CD4-positive, alpha-beta memory T cell (primary cell): ENCODE measurements at regions of chr1 and their contacts with region 1.

Region 1: GRCh38 chr1:162035241-162035640 is 11.6 kb upstream of the OLFML2B start:
- DNase-seq: no peak
- H3K4me3 ChIP-seq: no peak overlapping the region
- H3K4me3 Mint-ChIP-seq: no peak overlapping the region
- H3K27ac ChIP-seq: no peak overlapping the region
- H3K27ac Mint-ChIP-seq: no peak overlapping the region
- H3K4me1 ChIP-seq: no peaks in the 10 kb centered on the region
- H3K4me1 Mint-ChIP-seq: peaks cover 0 to 3% (median 3%) of the 10 kb centered on the region in 4 donors
- H3K27me3 ChIP-seq: peaks cover 11% of the 10 kb centered on the region
- H3K27me3 Mint-ChIP-seq: peaks cover 2 to 29% of the 10 kb centered on the region in 2 donors

Region 2: DNA sequence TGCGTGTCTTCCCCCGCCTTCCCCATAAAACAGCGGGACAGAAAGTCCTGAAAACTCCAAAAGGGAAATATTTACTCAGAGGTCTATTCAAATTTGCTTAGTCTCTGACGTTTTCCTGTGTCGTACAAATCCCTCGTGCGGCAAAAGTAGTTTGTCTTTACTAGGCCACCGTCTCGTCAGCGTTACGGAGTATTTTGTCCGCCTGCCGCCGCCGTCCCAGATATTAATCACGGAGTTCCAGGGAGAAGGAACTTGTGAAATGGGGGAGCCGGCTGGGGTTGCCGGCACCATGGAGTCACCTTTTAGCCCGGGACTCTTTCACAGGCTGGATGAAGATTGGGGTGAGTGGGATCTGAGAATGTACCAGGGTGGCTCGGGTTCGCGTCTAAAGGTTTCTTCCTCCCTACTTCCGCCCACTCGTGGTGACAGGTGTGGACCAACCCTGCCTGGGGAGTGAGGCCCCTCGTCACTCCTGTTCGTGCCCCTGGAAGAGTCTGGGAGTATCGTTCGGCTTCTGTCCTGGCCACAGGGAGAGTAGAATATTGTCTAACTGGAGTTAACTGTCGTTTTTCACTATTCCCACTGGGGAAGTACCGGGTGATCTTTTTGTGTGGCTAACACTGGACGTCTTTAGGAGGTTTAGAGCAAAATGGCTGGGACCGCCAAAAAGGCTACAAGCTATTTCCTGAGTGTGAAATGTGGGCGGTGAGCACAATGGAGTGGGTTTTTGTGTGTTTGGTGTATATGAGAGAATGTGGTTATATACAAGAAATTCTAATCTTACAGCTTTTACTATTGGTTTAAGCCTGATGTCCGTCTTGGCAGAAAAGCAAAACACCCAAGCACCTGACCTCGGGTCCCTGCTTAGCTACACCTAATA is 268.9 kb before region 1 on chr1 and contains the start of gene ATF6:
- CTCF ChIA-PET with region 1: interaction called, 63 read pairs
- POLR2A ChIA-PET with region 1: no interaction called
- intact Hi-C with region 1: loop called (anchors 1 kb)
- DNase-seq: peak; percentile 77 to 85 (median 82)
- H3K4me3 ChIP-seq: peak within 1 kb of the TSS; percentile 89 to 90
- H3K4me3 Mint-ChIP-seq: peak within 1 kb of the TSS; percentile 95 to 100 (median 99)
- H3K27ac ChIP-seq: peak within 1 kb of the TSS; percentile 88
- H3K27ac Mint-ChIP-seq: peak within 1 kb of the TSS; percentile 97 to 99 (median 98)
- H3K4me1 ChIP-seq: peaks cover 58% of the 10 kb centered on the region
- H3K4me1 Mint-ChIP-seq: peaks cover 29 to 50% (median 41%) of the 10 kb centered on the region in 4 donors
- H3K27me3 ChIP-seq: no peaks in the 10 kb centered on the region
- H3K27me3 Mint-ChIP-seq: no peaks in the 10 kb centered on the region
- total RNA-seq, gene ATF6: 22.3 to 22.4 TPM

Region 3: DNA sequence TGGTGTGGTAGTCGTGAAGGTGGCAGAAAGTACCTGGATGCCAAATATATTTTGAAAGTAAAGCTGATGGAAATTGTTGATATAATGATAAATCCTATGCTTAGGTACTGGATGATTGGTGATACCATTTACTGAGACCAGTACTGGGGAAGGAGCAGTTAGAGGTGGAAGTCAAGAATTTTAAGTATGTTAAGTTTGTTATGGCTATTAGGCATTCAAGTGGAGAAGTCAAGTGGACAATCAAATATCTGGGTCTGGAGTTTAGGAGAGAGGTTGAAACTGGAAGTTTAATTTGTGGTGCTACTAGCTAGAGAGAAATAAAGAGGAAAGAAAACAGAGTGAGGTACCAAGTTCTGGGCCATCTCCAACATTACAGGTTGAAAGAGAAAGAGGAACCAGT is 180.0 kb before region 1 on chr1:
- CTCF ChIA-PET with region 1: interaction called, 20 read pairs
- POLR2A ChIA-PET with region 1: no interaction called
- intact Hi-C with region 1: no loop called
- DNase-seq: no peak
- H3K4me3 ChIP-seq: no peak overlapping the region
- H3K4me3 Mint-ChIP-seq: no peak overlapping the region
- H3K27ac ChIP-seq: no peak overlapping the region
- H3K27ac Mint-ChIP-seq: peak overlapping the region in 1 of 7 donors; percentile 1
- H3K4me1 ChIP-seq: no peaks in the 10 kb centered on the region
- H3K4me1 Mint-ChIP-seq: peaks cover 0 to 3% (median under 1%) of the 10 kb centered on the region in 4 donors
- H3K27me3 ChIP-seq: no peaks in the 10 kb centered on the region
- H3K27me3 Mint-ChIP-seq: no peaks in the 10 kb centered on the region

Region 4: DNA sequence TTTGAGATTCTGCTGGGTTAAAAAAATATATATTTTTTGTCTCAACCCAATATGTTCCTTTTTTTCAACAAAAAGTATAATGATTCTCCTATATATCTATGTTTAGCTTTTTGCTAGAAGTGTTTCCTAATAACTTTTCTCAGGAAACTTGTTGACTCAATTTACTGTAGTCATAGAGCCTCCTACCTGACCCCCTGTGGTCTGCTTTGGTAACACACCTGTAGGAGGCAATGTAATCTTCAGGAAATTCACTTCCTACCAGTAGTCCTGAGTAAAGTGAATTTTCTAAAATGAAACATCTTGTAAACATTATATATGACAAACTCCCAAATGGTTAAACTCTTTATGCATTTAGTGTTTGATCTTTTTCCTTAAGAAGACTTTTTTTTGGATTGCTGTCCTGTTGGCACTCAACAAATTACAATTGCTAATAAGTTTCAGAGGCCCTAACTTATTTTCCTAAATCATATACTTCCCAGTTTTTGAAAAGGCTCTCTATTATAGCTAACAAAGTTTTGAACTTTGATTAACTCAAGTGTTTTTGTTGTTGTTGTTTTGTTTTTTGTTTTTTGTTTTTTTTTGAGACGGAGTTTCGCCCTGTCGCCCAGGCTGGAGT is 129.9 kb before region 1 on chr1:
- CTCF ChIA-PET with region 1: interaction called, 9 read pairs
- POLR2A ChIA-PET with region 1: no interaction called
- intact Hi-C with region 1: loop called (anchors 5 kb)
- DNase-seq: peak in 3 of 5 donors; percentile 7 to 28 (median 11)
- H3K4me3 ChIP-seq: no peak overlapping the region
- H3K4me3 Mint-ChIP-seq: no peak overlapping the region
- H3K27ac ChIP-seq: no peak overlapping the region
- H3K27ac Mint-ChIP-seq: no peak overlapping the region
- H3K4me1 ChIP-seq: no peaks in the 10 kb centered on the region
- H3K4me1 Mint-ChIP-seq: peaks cover 5 to 9% (median 6%) of the 10 kb centered on the region in 4 donors
- H3K27me3 ChIP-seq: no peaks in the 10 kb centered on the region
- H3K27me3 Mint-ChIP-seq: no peaks in the 10 kb centered on the region

Region 5: GRCh38 chr1:162276493-162276892 is 241.3 kb after region 1 on chr1:
- CTCF ChIA-PET with region 1: no interaction called
- POLR2A ChIA-PET with region 1: no interaction called
- intact Hi-C with region 1: no loop called
- DNase-seq: no peak
- H3K4me3 ChIP-seq: no peak overlapping the region
- H3K4me3 Mint-ChIP-seq: no peak overlapping the region
- H3K27ac ChIP-seq: no peak overlapping the region
- H3K27ac Mint-ChIP-seq: no peak overlapping the region
- H3K4me1 ChIP-seq: no peaks in the 10 kb centered on the region
- H3K4me1 Mint-ChIP-seq: no peaks in the 10 kb centered on the region
- H3K27me3 ChIP-seq: no peaks in the 10 kb centered on the region
- H3K27me3 Mint-ChIP-seq: peaks cover 15 to 19% of the 10 kb centered on the region in 2 donors